ENCODE measurements at regions of chr7 and their contacts with region 1.

Region 1: GRCh38 chr7:141654551-141654950 is 47.4 kb downstream of the DENND11 start:
- DNase-seq: peak; percentile 57 to 65
- H3K4me3 ChIP-seq: no peak overlapping the region
- H3K27ac ChIP-seq: no peak overlapping the region
- H3K4me1 ChIP-seq: peaks cover 0 to 10% (median 3%) of the 10 kb centered on the region in 4 donors
- H3K27me3 ChIP-seq: no peaks in the 10 kb centered on the region
- CTCF ChIP-seq: peak; percentile 29 to 43

Region 2: GRCh38 chr7:141262101-141263090 is 392.2 kb before region 1 on chr7:
- intact Hi-C with region 1: no loop called
- DNase-seq: no peak
- H3K4me3 ChIP-seq: no peak overlapping the region
- H3K27ac ChIP-seq: no peak overlapping the region
- H3K4me1 ChIP-seq: no peaks in the 10 kb centered on the region
- H3K27me3 ChIP-seq: no peaks in the 10 kb centered on the region
- CTCF ChIP-seq: no peak

Region 3: GRCh38 chr7:141551094-141551781 is 103.3 kb before region 1 on chr7 and contains the start of gene AGK:
- intact Hi-C with region 1: loop called (anchors 5 kb)
- DNase-seq: peak; percentile 47 to 76
- H3K4me3 ChIP-seq: peak within 1 kb of the TSS; percentile 98 to 100
- H3K27ac ChIP-seq: peak within 1 kb of the TSS; percentile 71 to 76
- H3K4me1 ChIP-seq: peaks cover 0 to 29% (median 18%) of the 10 kb centered on the region in 4 donors
- H3K27me3 ChIP-seq: no peaks in the 10 kb centered on the region
- CTCF ChIP-seq: no peak

Region 4: GRCh38 chr7:141563956-141564631 is 90.5 kb before region 1 on chr7:
- intact Hi-C with region 1: no loop called
- DNase-seq: no peak
- H3K4me3 ChIP-seq: no peak overlapping the region
- H3K27ac ChIP-seq: no peak overlapping the region
- H3K4me1 ChIP-seq: no peaks in the 10 kb centered on the region
- H3K27me3 ChIP-seq: no peaks in the 10 kb centered on the region
- CTCF ChIP-seq: no peak

Region 5: GRCh38 chr7:142557971-142558582 is 903.5 kb after region 1 on chr7:
- intact Hi-C with region 1: no loop called
- DNase-seq: no peak
- H3K4me3 ChIP-seq: no peak overlapping the region
- H3K27ac ChIP-seq: no peak overlapping the region
- H3K4me1 ChIP-seq: no peaks in the 10 kb centered on the region
- H3K27me3 ChIP-seq: no peaks in the 10 kb centered on the region
- CTCF ChIP-seq: no peak

Region 6: GRCh38 chr7:143222782-143223181 is 1568.2 kb after region 1 on chr7:
- intact Hi-C with region 1: no loop called
- DNase-seq: peak in 1 of 2 donors; percentile 48
- H3K4me3 ChIP-seq: no peak overlapping the region
- H3K27ac ChIP-seq: no peak overlapping the region
- H3K4me1 ChIP-seq: no peaks in the 10 kb centered on the region
- H3K27me3 ChIP-seq: no peaks in the 10 kb centered on the region
- CTCF ChIP-seq: no peak